Endothelial cell of umbilical vein (primary cell): ENCODE measurements at regions of chr3 and their contacts with region 1.

Region 1: GRCh38 chr3:151168269-151169094 is 34.5 kb downstream of the GPR171 start:
- DNase-seq: peak; percentile 38
- H3K4me3 ChIP-seq: no peak overlapping the region
- H3K27ac ChIP-seq: no peak overlapping the region
- H3K4me1 ChIP-seq: no peaks in the 10 kb centered on the region
- H3K27me3 ChIP-seq: no peaks in the 10 kb centered on the region
- CTCF ChIP-seq: peak; percentile 68 to 76
- POLR2A ChIP-seq: no peak

Region 2: GRCh38 chr3:151156618-151157216 is 11.8 kb before region 1 on chr3:
- CTCF ChIA-PET with region 1: interaction called, 14 read pairs
- POLR2A ChIA-PET with region 1: no interaction called
- dilution Hi-C with region 1: no loop called
- intact Hi-C with region 1: no loop called
- DNase-seq: peak; percentile 59
- H3K4me3 ChIP-seq: no peak overlapping the region
- H3K27ac ChIP-seq: no peak overlapping the region
- H3K4me1 ChIP-seq: no peaks in the 10 kb centered on the region
- H3K27me3 ChIP-seq: peaks cover 3 to 8% of the 10 kb centered on the region in 2 experiments
- CTCF ChIP-seq: peak; percentile 36 to 50
- POLR2A ChIP-seq: no peak

Region 3: GRCh38 chr3:151197981-151198767 is 29.7 kb after region 1 on chr3:
- CTCF ChIA-PET with region 1: interaction called, 11 read pairs
- POLR2A ChIA-PET with region 1: no interaction called
- dilution Hi-C with region 1: no loop called
- intact Hi-C with region 1: no loop called
- DNase-seq: no peak
- H3K4me3 ChIP-seq: no peak overlapping the region
- H3K27ac ChIP-seq: no peak overlapping the region
- H3K4me1 ChIP-seq: no peaks in the 10 kb centered on the region
- H3K27me3 ChIP-seq: no peaks in the 10 kb centered on the region
- CTCF ChIP-seq: no peak
- POLR2A ChIP-seq: no peak

Region 4: GRCh38 chr3:151227807-151228665 is 59.6 kb after region 1 on chr3:
- CTCF ChIA-PET with region 1: interaction called, 24 read pairs
- POLR2A ChIA-PET with region 1: no interaction called
- dilution Hi-C with region 1: no loop called
- intact Hi-C with region 1: loop called (anchors 1 kb)
- DNase-seq: peak; percentile 79
- H3K4me3 ChIP-seq: no peak overlapping the region
- H3K27ac ChIP-seq: peak overlapping the region; percentile 40
- H3K4me1 ChIP-seq: peaks cover 11% of the 10 kb centered on the region
- H3K27me3 ChIP-seq: no peaks in the 10 kb centered on the region
- CTCF ChIP-seq: peak; percentile 87 to 88
- POLR2A ChIP-seq: no peak

Region 5: GRCh38 chr3:151282921-151283320 is 114.4 kb after region 1 on chr3:
- CTCF ChIA-PET with region 1: interaction called, 98 read pairs
- POLR2A ChIA-PET with region 1: no interaction called
- dilution Hi-C with region 1: no loop called
- intact Hi-C with region 1: loop called (anchors 1 kb)
- DNase-seq: peak; percentile 58
- H3K4me3 ChIP-seq: no peak overlapping the region
- H3K27ac ChIP-seq: no peak overlapping the region
- H3K4me1 ChIP-seq: no peaks in the 10 kb centered on the region
- H3K27me3 ChIP-seq: peaks cover 0 to 6% of the 10 kb centered on the region in 2 experiments
- CTCF ChIP-seq: peak; percentile 30 to 42
- POLR2A ChIP-seq: no peak

Region 6: DNA sequence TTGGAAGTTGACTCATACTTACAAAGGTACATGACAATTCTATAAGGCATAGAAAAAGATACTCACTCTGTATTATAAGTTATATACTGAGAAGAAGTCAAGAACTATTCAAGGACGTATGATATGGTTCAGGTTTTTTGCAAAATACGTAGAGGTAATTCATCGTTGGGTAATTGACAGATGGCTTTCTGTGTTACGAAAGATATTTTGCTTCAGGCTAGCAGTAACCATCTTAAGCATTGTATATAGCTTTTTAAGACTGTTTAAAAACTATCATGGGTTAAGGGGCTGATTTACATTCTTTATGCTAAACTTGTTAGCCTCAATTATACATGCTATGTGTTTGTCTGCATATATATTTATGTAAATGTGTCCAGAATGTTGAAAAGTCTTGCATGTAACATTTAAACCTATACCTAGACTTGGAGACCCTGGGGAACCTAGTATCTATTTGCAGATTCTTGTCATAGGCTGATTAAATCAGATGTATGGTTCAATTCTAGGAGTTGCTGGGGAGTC is 120.9 kb after region 1 on chr3:
- CTCF ChIA-PET with region 1: interaction called, 98 read pairs
- POLR2A ChIA-PET with region 1: no interaction called
- dilution Hi-C with region 1: no loop called
- intact Hi-C with region 1: no loop called
- DNase-seq: no peak
- H3K4me3 ChIP-seq: no peak overlapping the region
- H3K27ac ChIP-seq: no peak overlapping the region
- H3K4me1 ChIP-seq: no peaks in the 10 kb centered on the region
- H3K27me3 ChIP-seq: peaks cover 0 to 9% of the 10 kb centered on the region in 2 experiments
- CTCF ChIP-seq: no peak
- POLR2A ChIP-seq: no peak

Region 7: GRCh38 chr3:151327571-151328198 is 159.2 kb after region 1 on chr3:
- CTCF ChIA-PET with region 1: interaction called, 8 read pairs
- POLR2A ChIA-PET with region 1: no interaction called
- dilution Hi-C with region 1: no loop called
- intact Hi-C with region 1: loop called (anchors 5 kb)
- DNase-seq: peak; percentile 27
- H3K4me3 ChIP-seq: no peak overlapping the region
- H3K27ac ChIP-seq: no peak overlapping the region
- H3K4me1 ChIP-seq: no peaks in the 10 kb centered on the region
- H3K27me3 ChIP-seq: no peaks in the 10 kb centered on the region
- CTCF ChIP-seq: peak in 1 of 2 donors; percentile 25
- POLR2A ChIP-seq: no peak

Region 8: GRCh38 chr3:151345859-151346258 is 177.4 kb after region 1 on chr3:
- CTCF ChIA-PET with region 1: no interaction called
- POLR2A ChIA-PET with region 1: no interaction called
- dilution Hi-C with region 1: no loop called
- intact Hi-C with region 1: no loop called
- DNase-seq: no peak
- H3K4me3 ChIP-seq: no peak overlapping the region
- H3K27ac ChIP-seq: no peak overlapping the region
- H3K4me1 ChIP-seq: no peaks in the 10 kb centered on the region
- H3K27me3 ChIP-seq: peaks cover 4 to 8% of the 10 kb centered on the region in 2 experiments
- CTCF ChIP-seq: no peak
- POLR2A ChIP-seq: no peak